ENCODE measurements at regions of chr2 and their contacts with region 1.

Region 1: GRCh38 chr2:223019987-223020717 is 31.8 kb upstream of the KCNE4 start:
- DNase-seq: no peak
- H3K4me3 ChIP-seq: no peak overlapping the region
- H3K27ac ChIP-seq: no peak overlapping the region
- H3K4me1 ChIP-seq: no peaks in the 10 kb centered on the region
- H3K27me3 ChIP-seq: no peaks in the 10 kb centered on the region
- CTCF ChIP-seq: no peak
- EP300 ChIP-seq: no peak
- POLR2A ChIP-seq: no peak

Region 2: GRCh38 chr2:223142153-223142552 is 122.0 kb after region 1 on chr2:
- intact Hi-C with region 1: loop called in 1 of 4 experiments (anchors 5 kb)
- DNase-seq: no peak
- H3K4me3 ChIP-seq: no peak overlapping the region
- H3K27ac ChIP-seq: no peak overlapping the region
- H3K4me1 ChIP-seq: no peaks in the 10 kb centered on the region
- H3K27me3 ChIP-seq: no peaks in the 10 kb centered on the region
- CTCF ChIP-seq: no peak
- EP300 ChIP-seq: no peak
- POLR2A ChIP-seq: no peak